Activated CD4-positive, alpha-beta T cell treated with anti-CD3 and anti-CD28 coated beads for 36 hours (primary cell): ENCODE measurements at regions of chr3 and their contacts with region 1.

Region 1: DNA sequence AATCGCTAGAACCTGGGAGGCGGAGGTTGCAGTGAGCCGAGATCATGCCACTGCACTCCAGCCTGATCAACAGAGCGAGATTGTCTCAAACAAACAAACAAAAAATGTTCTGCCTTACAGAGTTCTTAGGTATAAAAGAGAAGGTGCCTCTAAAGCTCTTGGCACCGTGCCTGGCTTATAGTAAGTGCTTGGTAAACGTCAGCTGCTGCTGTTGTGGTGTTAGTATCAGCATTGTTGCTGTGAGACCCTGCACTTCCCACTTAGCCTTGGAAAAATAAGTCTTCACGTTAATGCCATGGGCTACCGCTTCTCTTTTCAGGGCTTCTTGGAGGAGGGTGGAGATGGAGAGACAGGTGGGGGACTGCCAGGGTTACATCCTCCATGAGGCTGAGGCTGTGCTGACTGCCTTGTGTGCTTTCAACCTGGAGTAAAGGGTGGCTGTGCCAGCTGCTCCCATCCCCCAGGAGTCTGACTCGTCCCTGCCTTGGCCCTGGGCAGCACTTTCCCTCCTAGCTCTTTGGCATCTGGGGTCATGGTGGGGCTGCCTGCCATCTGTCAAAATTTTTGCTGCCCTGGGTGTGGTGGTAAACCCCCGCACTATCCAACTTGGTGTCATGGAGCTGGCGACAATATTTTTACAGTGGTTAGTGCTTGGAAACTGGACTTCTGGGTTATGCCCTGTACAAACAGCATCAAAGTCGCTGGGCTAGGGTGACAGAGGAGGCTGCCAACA is 17.8 kb downstream of the FLNB start:
- DNase-seq: no peak
- ATAC-seq: no peak
- H3K4me3 Mint-ChIP-seq: no peak overlapping the region
- H3K27ac Mint-ChIP-seq: no peak overlapping the region
- H3K4me1 Mint-ChIP-seq: peaks cover 55% of the 10 kb centered on the region
- H3K27me3 Mint-ChIP-seq: no peaks in the 10 kb centered on the region

Region 2: DNA sequence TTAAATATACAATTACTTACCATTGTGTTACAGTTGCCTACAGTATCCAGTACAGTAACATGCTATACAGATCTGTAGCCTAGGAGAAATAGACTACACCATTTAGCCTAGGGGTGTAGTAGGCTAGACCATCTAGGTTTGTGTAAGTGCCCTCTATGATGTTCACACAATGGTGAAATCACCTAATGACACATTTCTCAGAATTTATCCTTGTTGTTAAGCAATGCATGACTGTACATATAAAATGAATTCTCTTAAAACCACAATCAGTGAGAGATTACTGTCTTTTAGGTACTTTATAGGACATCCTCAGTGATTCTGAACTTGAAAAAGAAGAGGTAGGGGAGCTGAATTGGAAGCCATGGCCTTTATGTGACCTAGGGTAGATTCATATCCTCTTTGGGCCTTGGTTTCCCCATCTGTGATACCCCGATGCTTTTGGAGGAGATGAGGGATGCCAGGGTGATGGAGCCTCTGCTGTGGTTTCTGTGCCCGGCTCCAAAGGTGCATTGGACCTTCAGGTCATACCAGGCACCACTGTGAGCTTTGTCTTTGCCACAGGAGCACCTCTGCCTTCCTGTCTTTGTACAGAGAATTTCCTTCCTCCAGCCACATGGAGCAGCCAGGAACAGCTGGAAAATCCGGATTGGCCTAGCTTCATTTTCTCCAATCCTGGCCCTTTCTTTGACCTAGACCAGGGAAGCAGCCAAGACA is 69.7 kb before region 1 on chr3:
- CTCF ChIA-PET with region 1: no interaction called
- POLR2A ChIA-PET with region 1: no interaction called
- intact Hi-C with region 1: loop called in 1 of 2 experiments (anchors 2 kb)
- DNase-seq: no peak
- ATAC-seq: peak; percentile 94
- H3K4me3 Mint-ChIP-seq: no peak overlapping the region
- H3K27ac Mint-ChIP-seq: no peak overlapping the region
- H3K4me1 Mint-ChIP-seq: peaks cover 4% of the 10 kb centered on the region
- H3K27me3 Mint-ChIP-seq: no peaks in the 10 kb centered on the region

Region 3: GRCh38 chr3:58013973-58014649 is 11.9 kb before region 1 on chr3:
- CTCF ChIA-PET with region 1: interaction called, 22 read pairs
- POLR2A ChIA-PET with region 1: no interaction called
- intact Hi-C with region 1: no loop called
- DNase-seq: no peak
- ATAC-seq: no peak
- H3K4me3 Mint-ChIP-seq: no peak overlapping the region
- H3K27ac Mint-ChIP-seq: no peak overlapping the region
- H3K4me1 Mint-ChIP-seq: peaks cover 48% of the 10 kb centered on the region
- H3K27me3 Mint-ChIP-seq: no peaks in the 10 kb centered on the region